ENCODE measurements at regions of chr2 and their contacts with region 1.

Region 1: GRCh38 chr2:157302492-157303099 is 23.0 kb downstream of the ERMN start:
- DNase-seq: no peak
- H3K4me3 Mint-ChIP-seq: no peak overlapping the region
- H3K27ac Mint-ChIP-seq: no peak overlapping the region
- H3K4me1 Mint-ChIP-seq: peaks cover 16% of the 10 kb centered on the region
- H3K27me3 Mint-ChIP-seq: peaks cover 10% of the 10 kb centered on the region

Region 2: DNA sequence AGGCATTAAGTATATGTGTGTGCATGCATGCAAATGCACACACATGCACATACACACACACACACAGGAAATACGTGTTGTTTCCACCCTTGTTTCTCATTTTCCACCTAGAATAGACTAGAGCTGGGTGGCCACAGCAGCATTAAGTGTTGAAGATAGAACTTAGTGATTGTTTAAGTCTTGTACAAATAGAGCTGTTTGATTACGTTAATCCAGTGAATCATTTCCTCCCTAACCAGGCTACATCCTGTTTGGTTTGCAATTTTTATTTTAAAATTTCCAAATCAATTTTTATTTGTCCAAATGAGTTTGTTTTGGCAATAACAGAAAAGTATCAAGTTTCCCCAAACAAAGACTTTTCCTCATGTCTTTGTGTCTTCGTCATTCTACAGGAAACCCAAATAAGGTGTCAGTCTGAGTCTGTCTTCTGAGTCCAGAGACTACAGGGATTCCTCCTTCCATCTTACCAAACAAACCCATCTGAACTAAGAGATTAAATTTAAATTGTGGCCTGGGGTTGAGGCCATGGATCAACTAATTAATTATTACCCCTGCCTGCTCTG is 119.7 kb before region 1 on chr2:
- intact Hi-C with region 1: no loop called
- DNase-seq: no peak
- H3K4me3 Mint-ChIP-seq: no peak overlapping the region
- H3K27ac Mint-ChIP-seq: peak overlapping the region; percentile 30
- H3K4me1 Mint-ChIP-seq: peaks cover 19% of the 10 kb centered on the region
- H3K27me3 Mint-ChIP-seq: peaks cover 5% of the 10 kb centered on the region

Region 3: GRCh38 chr2:157327621-157328500 is 25.3 kb after region 1 on chr2:
- intact Hi-C with region 1: loop called (anchors 2 kb)
- DNase-seq: peak; percentile 72
- H3K4me3 Mint-ChIP-seq: no peak overlapping the region
- H3K27ac Mint-ChIP-seq: no peak overlapping the region
- H3K4me1 Mint-ChIP-seq: peaks cover 31% of the 10 kb centered on the region
- H3K27me3 Mint-ChIP-seq: no peaks in the 10 kb centered on the region

Region 4: DNA sequence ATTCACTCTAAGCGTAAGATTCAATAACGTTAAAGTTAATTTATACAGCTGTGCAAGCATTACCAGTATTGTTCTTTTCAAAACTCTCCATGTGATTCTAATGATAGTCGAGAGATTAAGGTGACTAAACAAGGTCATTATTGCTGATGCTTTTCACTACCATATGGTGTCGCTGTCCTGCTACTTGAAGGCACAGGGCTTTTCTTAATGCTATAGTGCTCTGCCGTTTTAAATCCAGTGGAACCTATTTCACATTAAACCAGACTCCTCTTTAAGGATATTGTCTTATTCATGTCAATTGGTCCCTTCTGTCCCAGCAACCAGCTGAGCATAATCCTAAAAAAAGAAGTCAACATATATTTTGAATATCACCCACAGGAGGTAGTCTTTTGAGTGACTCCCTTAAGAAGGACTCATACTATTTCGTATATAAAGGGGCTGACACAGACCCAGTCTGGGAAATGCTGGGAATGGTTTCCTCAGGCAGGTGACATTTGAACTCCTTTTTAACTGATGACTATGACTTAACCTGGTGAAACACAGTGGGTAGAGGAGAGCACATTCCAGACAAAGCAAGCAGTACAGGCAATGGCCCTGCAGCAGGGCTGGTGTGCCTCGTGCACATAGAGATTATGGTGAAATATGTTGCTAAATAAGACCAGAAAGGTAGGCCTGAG is 195.2 kb after region 1 on chr2:
- intact Hi-C with region 1: loop called (anchors 2 kb)
- DNase-seq: no peak
- H3K4me3 Mint-ChIP-seq: no peak overlapping the region
- H3K27ac Mint-ChIP-seq: no peak overlapping the region
- H3K4me1 Mint-ChIP-seq: peaks cover 18% of the 10 kb centered on the region
- H3K27me3 Mint-ChIP-seq: no peaks in the 10 kb centered on the region

Region 5: DNA sequence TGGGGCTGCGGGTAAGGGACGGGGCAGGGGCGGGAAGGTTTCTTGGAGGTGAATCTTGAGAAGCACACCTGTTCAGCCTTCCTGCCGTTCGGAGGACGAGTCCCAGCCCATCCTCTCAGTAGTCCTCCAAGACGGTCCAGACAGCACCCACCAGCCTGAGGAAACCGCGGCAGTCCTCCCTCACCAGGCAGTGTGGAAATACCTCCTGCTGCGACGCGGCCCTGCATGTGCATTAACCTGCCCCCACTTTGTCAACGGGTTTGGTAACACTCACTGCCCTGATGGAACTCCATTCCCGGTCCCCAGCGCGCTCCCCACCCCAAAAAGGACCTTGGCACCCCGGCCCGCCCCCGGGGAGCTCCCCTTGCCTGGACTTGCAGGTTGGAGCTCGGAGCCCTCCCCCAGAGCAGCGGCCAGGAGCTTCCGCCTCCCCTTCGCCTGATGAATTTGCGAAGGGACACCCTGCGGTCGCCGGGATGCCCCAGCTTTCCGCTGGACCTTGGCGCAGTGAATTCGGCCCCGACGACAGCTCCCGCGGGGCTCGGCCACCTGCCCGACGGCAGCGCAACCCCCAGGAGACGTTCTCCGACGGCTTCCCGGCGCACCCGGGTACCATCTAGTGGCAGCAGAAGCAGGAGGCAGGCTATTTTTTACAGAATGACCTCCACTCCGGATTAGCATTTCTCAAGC is 294.5 kb after region 1 on chr2:
- intact Hi-C with region 1: loop called (anchors 1 kb)
- DNase-seq: peak; percentile 20
- H3K4me3 Mint-ChIP-seq: peak overlapping the region; percentile 39
- H3K27ac Mint-ChIP-seq: no peak overlapping the region
- H3K4me1 Mint-ChIP-seq: peaks cover 6% of the 10 kb centered on the region
- H3K27me3 Mint-ChIP-seq: peaks cover 47% of the 10 kb centered on the region

Region 6: GRCh38 chr2:157751462-157752058 is 449.0 kb after region 1 on chr2:
- intact Hi-C with region 1: loop called (anchors 10 kb)
- DNase-seq: no peak
- H3K4me3 Mint-ChIP-seq: no peak overlapping the region
- H3K27ac Mint-ChIP-seq: no peak overlapping the region
- H3K4me1 Mint-ChIP-seq: peaks cover 30% of the 10 kb centered on the region
- H3K27me3 Mint-ChIP-seq: no peaks in the 10 kb centered on the region

Region 7: GRCh38 chr2:157777427-157777826 is 474.8 kb after region 1 on chr2:
- intact Hi-C with region 1: loop called (anchors 10 kb)
- DNase-seq: peak; percentile 20
- H3K4me3 Mint-ChIP-seq: no peak overlapping the region
- H3K27ac Mint-ChIP-seq: no peak overlapping the region
- H3K4me1 Mint-ChIP-seq: peaks cover 29% of the 10 kb centered on the region
- H3K27me3 Mint-ChIP-seq: no peaks in the 10 kb centered on the region

Region 8: DNA sequence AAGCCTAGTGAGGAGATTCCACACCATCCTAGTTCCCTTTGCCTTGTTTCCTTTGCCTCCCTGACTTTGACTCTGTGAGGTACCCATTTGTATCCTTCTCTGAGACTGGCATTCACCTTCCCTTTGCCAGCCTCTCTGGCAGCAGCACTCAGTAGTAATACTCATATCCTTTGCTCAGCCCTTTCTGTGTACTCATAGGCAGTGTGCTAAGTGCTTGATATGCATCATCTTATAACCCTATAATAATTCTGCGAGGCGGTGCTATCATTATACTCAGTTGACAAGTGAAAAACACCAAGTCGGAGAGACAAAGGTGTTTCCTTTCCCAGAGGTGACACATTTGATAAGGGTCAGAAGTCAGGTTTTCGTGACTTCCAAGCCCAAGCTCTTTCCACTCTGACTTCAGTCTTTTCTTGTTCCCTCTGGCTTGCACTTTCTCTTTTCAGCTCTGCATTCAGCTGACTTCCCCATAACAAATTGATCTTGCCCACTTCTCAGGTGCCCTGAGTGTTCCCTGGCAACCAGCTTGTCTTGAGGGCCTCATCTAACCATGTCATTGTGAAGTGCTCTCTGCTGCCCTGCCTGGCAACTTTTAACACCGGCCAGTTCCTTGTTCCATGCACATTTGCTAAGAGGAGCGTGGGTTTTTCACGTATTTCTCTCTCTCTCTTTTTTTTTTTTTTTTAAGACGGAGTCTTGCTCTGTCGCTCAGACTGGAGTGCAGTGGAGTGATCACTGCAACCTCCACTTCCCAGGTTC is 704.5 kb after region 1 on chr2:
- intact Hi-C with region 1: loop called (anchors 5 kb)
- DNase-seq: no peak
- H3K4me3 Mint-ChIP-seq: no peak overlapping the region
- H3K27ac Mint-ChIP-seq: no peak overlapping the region
- H3K4me1 Mint-ChIP-seq: peaks cover 15% of the 10 kb centered on the region
- H3K27me3 Mint-ChIP-seq: no peaks in the 10 kb centered on the region